Breast epithelium (tissue), 4 donors: ENCODE measurements at regions of chr1 and their contacts with region 1.

Region 1: DNA sequence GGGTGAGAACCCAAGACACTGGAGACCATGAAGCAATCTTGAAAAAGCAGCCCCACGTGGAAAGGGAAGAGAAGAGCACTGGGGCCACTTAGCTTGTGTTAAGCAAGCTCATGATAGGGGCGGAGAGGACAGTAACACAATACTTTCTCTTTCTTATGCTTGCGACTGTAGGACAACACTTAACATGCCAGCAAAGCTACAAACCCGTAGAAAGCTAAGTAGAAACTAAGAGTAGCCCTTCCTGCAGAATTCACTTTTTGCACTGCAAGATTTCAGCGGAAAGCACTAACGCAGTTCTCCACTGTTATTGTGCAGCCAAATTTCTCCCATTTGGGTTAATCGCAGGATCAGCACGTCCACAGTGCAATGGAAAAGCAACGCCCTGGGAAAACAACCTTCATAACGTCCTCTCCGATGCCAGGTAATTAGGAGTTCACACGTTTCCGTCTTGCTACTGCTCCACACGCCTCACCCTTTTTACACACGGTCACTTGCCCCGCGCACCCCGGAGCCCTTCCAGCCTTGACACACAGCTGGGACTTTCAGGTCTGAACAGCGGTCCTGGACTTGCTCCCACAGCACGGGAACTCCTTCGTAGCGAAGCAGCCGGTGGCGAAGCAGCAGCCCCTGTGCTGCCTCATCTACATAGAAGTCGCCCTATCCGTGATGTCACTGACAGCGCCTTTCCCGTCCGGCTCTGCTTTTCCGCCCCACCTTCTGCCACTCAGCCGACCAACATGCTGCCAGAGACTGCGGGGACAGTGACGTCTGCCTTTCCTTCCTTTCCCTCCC is 148.6 kb downstream of the PPIAL4G start:
- DNase-seq: peak in 1 of 2 donors; percentile 90
- H3K4me3 ChIP-seq: peak overlapping the region; percentile 51 to 64 (median 57)
- H3K27ac ChIP-seq: peak overlapping the region; percentile 84 to 93
- H3K4me1 ChIP-seq: no peaks in the 10 kb centered on the region
- H3K27me3 ChIP-seq: no peaks in the 10 kb centered on the region
- CTCF ChIP-seq: no peak
- POLR2A ChIP-seq: peak; percentile 31

Region 2: GRCh38 chr1:148272901-148273300 is 61.6 kb before region 1 on chr1:
- intact Hi-C with region 1: loop called (anchors 10 kb)
- DNase-seq: no peak
- H3K4me3 ChIP-seq: no peak overlapping the region
- H3K27ac ChIP-seq: no peak overlapping the region
- H3K4me1 ChIP-seq: no peaks in the 10 kb centered on the region
- H3K27me3 ChIP-seq: no peaks in the 10 kb centered on the region
- CTCF ChIP-seq: no peak
- POLR2A ChIP-seq: no peak

Region 3: DNA sequence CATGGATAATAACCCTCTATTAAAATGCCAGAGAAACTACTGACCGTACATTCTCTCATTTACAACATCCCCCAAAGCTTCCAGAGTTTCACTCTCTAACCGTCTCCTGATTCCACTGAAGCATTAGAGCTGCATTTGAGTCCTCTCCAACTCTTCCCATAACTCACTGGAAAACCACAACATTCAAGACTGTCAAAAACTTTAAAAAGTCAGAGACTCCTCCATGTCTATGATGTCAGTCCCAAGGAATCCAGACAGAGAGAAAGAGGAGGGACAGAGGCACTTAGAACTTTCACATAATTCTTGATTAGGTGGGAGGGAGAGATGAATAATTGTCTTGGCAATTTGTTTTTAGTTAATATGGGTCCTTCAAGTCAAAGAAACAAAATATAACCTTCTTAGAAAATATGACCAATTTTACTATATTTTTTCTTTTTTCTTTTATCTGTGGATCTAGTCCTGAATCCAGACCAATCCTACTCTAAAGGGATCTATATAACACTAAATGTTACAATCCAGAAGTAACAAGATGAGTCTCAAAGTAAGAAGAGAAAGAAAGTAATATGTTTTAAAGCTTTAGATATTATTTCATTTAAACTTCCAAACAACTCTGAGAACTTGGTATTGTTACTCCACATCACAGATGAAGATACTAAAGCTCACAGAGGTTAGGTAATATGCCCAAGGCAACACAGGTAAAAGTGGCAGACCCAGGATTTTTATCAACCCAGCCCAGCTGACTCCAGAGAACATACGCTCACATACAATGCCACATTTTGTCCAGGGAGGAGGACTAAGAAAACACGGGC is 1652.2 kb after region 1 on chr1:
- intact Hi-C with region 1: no loop called
- DNase-seq: no peak
- H3K4me3 ChIP-seq: no peak overlapping the region
- H3K27ac ChIP-seq: peak overlapping the region; percentile 11 to 24
- H3K4me1 ChIP-seq: no peaks in the 10 kb centered on the region
- H3K27me3 ChIP-seq: no peaks in the 10 kb centered on the region
- CTCF ChIP-seq: no peak
- POLR2A ChIP-seq: no peak